Activated CD8-positive, alpha-beta T cell treated with anti-CD3 and anti-CD28 coated beads for 36 hours (primary cell): ENCODE measurements at regions of chr17 and their contacts with region 1.

Region 1: GRCh38 chr17:10646392-10646990 is 10.6 kb downstream of the MYH3 start:
- DNase-seq: peak; percentile 77
- ATAC-seq: peak; percentile 79
- H3K4me3 Mint-ChIP-seq: no peak overlapping the region
- H3K27ac Mint-ChIP-seq: no peak overlapping the region
- H3K4me1 Mint-ChIP-seq: no peaks in the 10 kb centered on the region
- H3K27me3 Mint-ChIP-seq: no peaks in the 10 kb centered on the region
- CTCF ChIP-seq: peak; percentile 89

Region 2: DNA sequence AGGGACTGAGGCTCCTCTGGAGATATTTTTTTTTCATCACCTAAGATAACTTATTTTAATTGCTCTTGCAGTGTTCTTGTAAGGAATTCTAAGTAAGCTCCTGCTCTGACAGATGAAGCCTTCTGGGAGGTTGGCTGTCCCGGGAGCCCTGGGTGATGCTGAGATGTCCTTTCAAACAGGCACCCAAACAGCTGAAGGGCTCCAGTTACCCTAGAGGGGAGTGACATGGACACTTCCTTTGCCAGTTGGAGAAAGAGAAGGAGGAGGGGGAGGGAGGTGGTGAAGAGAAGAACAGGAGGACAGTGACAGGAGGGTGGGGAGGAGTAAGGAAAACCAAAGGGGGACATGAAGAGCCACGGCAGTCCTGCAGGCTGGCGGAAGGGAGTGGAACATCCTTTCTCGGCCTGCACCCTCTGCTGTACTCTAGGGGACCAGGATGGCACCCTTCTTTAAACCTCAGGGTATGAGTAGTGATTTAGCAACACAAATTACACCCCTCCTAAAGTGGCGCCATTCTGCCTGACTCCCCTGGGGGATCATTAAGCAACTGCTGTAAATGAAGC is 41.2 kb before region 1 on chr17:
- CTCF ChIA-PET with region 1: no interaction called
- POLR2A ChIA-PET with region 1: no interaction called
- intact Hi-C with region 1: no loop called
- DNase-seq: no peak
- ATAC-seq: no peak
- H3K4me3 Mint-ChIP-seq: no peak overlapping the region
- H3K27ac Mint-ChIP-seq: no peak overlapping the region
- H3K4me1 Mint-ChIP-seq: no peaks in the 10 kb centered on the region
- H3K27me3 Mint-ChIP-seq: peaks cover 7% of the 10 kb centered on the region
- CTCF ChIP-seq: no peak

Region 3: GRCh38 chr17:10631048-10631700 is 15.3 kb before region 1 on chr17:
- CTCF ChIA-PET with region 1: interaction called, 59 read pairs
- POLR2A ChIA-PET with region 1: no interaction called
- intact Hi-C with region 1: no loop called
- DNase-seq: peak; percentile 16
- ATAC-seq: no peak
- H3K4me3 Mint-ChIP-seq: no peak overlapping the region
- H3K27ac Mint-ChIP-seq: no peak overlapping the region
- H3K4me1 Mint-ChIP-seq: no peaks in the 10 kb centered on the region
- H3K27me3 Mint-ChIP-seq: no peaks in the 10 kb centered on the region
- CTCF ChIP-seq: peak; percentile 91

Region 4: DNA sequence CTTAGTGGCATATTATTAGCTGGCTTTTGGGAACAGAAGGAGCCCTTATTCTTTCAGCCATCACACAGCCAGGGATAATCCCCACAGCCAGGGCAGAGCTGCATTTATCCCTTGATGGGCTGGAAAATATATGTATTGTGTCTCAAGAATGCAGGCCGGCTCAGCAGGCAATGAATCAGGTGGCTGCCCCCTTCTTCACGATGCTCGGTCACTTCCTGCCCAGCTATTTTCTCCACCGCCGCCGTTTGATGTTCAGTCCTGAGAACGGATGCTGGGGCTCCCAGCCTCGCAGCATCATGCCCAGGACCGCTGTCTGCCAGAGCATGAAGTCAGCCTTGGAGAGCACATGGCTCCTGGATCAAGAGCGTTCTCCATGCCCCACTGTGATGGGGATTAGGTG is 14.9 kb after region 1 on chr17:
- CTCF ChIA-PET with region 1: interaction called, 10 read pairs
- POLR2A ChIA-PET with region 1: no interaction called
- intact Hi-C with region 1: no loop called
- DNase-seq: no peak
- ATAC-seq: no peak
- H3K4me3 Mint-ChIP-seq: no peak overlapping the region
- H3K27ac Mint-ChIP-seq: no peak overlapping the region
- H3K4me1 Mint-ChIP-seq: no peaks in the 10 kb centered on the region
- H3K27me3 Mint-ChIP-seq: no peaks in the 10 kb centered on the region
- CTCF ChIP-seq: no peak

Region 5: DNA sequence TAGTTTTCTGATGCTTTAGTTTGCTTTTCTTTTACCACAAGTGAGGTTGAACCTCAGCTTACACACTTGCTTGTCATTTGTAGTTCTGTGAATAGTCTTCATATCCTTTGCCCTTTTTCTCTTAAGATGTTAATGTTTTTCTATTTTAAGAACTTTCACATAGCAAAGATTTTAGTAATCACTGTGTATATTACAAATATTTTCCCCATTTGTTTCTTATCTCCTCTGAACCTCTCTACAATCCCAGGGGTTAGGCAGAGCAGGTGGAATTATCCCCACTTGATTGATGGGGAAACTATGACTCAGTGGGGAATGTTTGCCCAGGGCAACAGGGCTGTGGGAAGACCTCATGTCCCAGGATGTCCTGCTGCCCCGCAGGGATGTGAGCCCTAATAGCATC is 22.3 kb after region 1 on chr17:
- CTCF ChIA-PET with region 1: interaction called, 11 read pairs
- POLR2A ChIA-PET with region 1: no interaction called
- intact Hi-C with region 1: no loop called
- DNase-seq: no peak
- ATAC-seq: no peak
- H3K4me3 Mint-ChIP-seq: no peak overlapping the region
- H3K27ac Mint-ChIP-seq: no peak overlapping the region
- H3K4me1 Mint-ChIP-seq: no peaks in the 10 kb centered on the region
- H3K27me3 Mint-ChIP-seq: no peaks in the 10 kb centered on the region
- CTCF ChIP-seq: no peak

Region 6: DNA sequence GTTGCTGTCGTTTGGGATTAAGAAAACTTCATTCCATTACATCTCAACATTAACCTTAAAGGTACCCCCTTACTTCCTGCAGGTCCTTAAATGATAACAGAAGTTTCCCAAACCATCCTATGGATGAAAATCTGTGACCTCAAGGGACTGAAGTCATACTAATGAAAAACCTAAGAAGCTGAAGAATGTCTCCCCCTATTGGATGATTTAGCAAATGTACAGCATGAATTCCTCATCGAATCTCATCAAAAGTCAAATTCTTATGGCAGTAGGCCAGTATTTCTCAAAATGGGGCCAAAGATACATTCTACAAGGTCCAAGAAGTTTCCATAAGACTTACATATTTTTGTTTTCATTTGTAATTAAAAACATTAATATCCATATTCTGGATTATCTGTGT is 37.4 kb after region 1 on chr17:
- CTCF ChIA-PET with region 1: interaction called, 34 read pairs
- POLR2A ChIA-PET with region 1: interaction called, 4 read pairs
- intact Hi-C with region 1: no loop called
- DNase-seq: no peak
- ATAC-seq: no peak
- H3K4me3 Mint-ChIP-seq: no peak overlapping the region
- H3K27ac Mint-ChIP-seq: no peak overlapping the region
- H3K4me1 Mint-ChIP-seq: peaks cover 6% of the 10 kb centered on the region
- H3K27me3 Mint-ChIP-seq: no peaks in the 10 kb centered on the region
- CTCF ChIP-seq: peak; percentile 67

Region 7: GRCh38 chr17:10844621-10845387 is 198.3 kb after region 1 on chr17:
- CTCF ChIA-PET with region 1: interaction called, 36 read pairs
- POLR2A ChIA-PET with region 1: no interaction called
- intact Hi-C with region 1: loop called (anchors 2 kb)
- DNase-seq: peak; percentile 77
- ATAC-seq: peak; percentile 99
- H3K4me3 Mint-ChIP-seq: peak overlapping the region; percentile 66
- H3K27ac Mint-ChIP-seq: no peak overlapping the region
- H3K4me1 Mint-ChIP-seq: peaks cover 7% of the 10 kb centered on the region
- H3K27me3 Mint-ChIP-seq: peaks cover under 1% of the 10 kb centered on the region
- CTCF ChIP-seq: peak; percentile 91